Tibial artery (tissue), 4 donors: ENCODE measurements at regions of chr12 and their contacts with region 1.

Region 1: DNA sequence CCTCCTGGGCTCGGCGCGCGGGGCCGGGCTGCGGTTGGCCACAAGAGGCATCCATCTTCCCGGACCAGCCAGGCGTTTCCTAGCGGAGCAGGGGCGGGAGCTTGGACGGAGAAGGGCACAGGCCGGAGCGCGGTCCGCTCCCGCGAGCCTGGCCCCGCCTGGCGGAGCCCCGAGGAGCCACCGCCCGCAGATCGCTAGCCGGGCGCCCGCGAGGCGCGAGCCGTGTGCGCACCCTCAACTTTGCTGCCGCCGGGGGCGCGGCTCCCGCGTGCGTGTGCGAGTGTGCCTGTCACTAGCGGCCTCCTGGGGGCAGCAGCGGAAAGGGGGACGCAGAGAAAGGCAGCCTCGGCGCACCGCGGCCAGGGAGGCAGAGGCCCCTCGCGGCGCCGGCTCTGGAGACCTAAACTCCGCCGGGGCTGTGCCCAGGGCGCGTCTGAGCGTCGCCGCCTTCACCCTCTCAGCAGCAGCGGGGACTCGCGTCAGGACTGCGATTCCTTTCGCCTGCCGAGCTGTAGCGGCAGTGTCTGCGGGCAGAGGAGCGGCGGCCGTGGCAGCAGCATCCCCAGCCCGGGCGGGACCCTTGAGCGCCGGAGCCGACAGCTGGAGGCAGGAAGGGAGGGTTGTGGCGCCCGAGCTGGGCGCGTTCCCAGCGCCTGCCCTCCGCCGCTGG is 644 bp upstream of the SRGAP1 start:
- DNase-seq: peak; percentile 88 to 95
- H3K4me3 ChIP-seq: peak overlapping the region; percentile 91 to 93
- H3K27ac ChIP-seq: peak overlapping the region; percentile 92 to 97
- H3K4me1 ChIP-seq: peaks cover 0 to 32% (median 9%) of the 10 kb centered on the region in 4 donors
- H3K27me3 ChIP-seq: no peaks in the 10 kb centered on the region
- CTCF ChIP-seq: peak; percentile 93 to 98

Region 2: GRCh38 chr12:64088431-64089349 is 244.8 kb after region 1 on chr12:
- intact Hi-C with region 1: loop called (anchors 10 kb)
- DNase-seq: peak; percentile 74
- H3K4me3 ChIP-seq: peak overlapping the region; percentile 2 to 8
- H3K27ac ChIP-seq: peak overlapping the region; percentile 49 to 67
- H3K4me1 ChIP-seq: peaks cover 0 to 28% (median 13%) of the 10 kb centered on the region in 4 donors
- H3K27me3 ChIP-seq: no peaks in the 10 kb centered on the region
- CTCF ChIP-seq: no peak

Region 3: GRCh38 chr12:64181504-64182291 is 337.8 kb after region 1 on chr12:
- intact Hi-C with region 1: loop called (anchors 5 kb)
- DNase-seq: peak; percentile 52 to 74
- H3K4me3 ChIP-seq: peak overlapping the region; percentile 6 to 7
- H3K27ac ChIP-seq: peak overlapping the region; percentile 43 to 61
- H3K4me1 ChIP-seq: peaks cover 0 to 24% (median 7%) of the 10 kb centered on the region in 4 donors
- H3K27me3 ChIP-seq: no peaks in the 10 kb centered on the region
- CTCF ChIP-seq: peak; percentile 59 to 65

Region 4: DNA sequence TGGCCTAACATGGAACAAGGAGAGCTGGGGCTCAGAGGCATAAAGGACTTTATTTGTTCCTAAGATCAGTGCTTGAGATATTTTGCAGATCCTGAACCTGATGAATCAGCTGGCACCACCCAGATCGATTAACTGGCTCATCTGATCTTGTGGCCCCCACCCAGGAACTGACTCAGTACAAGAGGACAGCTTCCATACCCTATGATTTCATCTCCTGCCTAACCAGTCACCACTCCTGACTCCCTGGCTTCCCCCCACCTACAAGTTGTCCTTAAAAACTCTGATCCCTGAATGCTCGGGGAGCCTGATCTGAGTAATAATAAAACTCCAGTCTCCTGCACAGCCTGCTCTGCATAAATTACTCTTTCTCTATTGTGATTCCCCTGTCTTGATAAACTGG is 541.6 kb after region 1 on chr12:
- intact Hi-C with region 1: loop called (anchors 10 kb)
- DNase-seq: no peak
- H3K4me3 ChIP-seq: no peak overlapping the region
- H3K27ac ChIP-seq: no peak overlapping the region
- H3K4me1 ChIP-seq: peaks cover 0 to 5% (median 1%) of the 10 kb centered on the region in 4 donors
- H3K27me3 ChIP-seq: peaks cover 0 to 14% of the 10 kb centered on the region in 2 donors
- CTCF ChIP-seq: no peak